Activated B cell treated with CpG ODN at 0.5 μM for 24 hours (primary cell): ENCODE measurements at regions of chr1 and their contacts with region 1.

Region 1: GRCh38 chr1:169893494-169894362 is at the start of gene SCYL3:
- DNase-seq: peak; percentile 82
- ATAC-seq: peak; percentile 87
- H3K4me3 Mint-ChIP-seq: peak within 1 kb of the TSS; percentile 88
- H3K27ac Mint-ChIP-seq: peak within 1 kb of the TSS; percentile 100
- H3K4me1 Mint-ChIP-seq: peaks cover 40% of the 10 kb centered on the region
- H3K27me3 Mint-ChIP-seq: peaks cover 4% of the 10 kb centered on the region
- CTCF ChIP-seq: no peak
- total RNA-seq, gene SCYL3: 14.5 and 16.2 TPM in 2 replicates

Region 2: DNA sequence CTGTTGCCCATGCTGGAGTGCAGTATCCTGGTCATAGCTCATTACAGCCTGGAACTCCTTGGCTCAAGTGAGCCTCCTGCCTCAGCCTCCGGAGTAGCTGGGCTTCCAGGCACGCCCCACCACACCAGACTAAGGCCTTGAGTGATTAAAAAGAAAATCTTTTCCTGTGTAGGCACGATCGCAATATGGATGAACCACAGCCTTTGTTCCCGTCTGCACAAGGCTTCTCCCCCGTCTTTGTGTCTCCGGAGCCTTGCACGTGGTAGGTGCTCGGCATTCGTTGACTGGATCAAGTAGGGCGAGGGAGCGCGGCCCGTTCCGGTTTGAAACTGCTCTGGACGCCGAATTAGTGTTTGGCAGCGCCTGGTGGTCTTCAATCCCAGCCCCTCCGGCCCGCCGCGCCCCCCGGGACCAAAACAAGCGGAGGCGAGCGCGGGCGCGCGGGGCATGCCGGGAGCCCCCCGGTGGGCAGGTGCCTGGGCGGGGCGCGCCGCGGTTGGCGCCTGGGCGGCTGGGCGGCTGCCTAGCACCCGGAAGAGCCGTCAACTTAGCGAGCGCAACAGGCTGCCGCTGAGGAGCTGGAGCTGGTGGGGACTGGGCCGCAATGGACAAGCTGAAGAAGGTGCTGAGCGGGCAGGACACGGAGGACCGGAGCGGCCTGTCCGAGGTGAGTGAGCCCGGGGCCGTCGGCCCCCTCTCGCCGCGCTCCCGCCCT is 1668.1 kb before region 1 on chr1 and contains the start of gene SFT2D2:
- CTCF ChIA-PET with region 1: no interaction called
- POLR2A ChIA-PET with region 1: no interaction called
- intact Hi-C with region 1: loop called (anchors 5 kb)
- DNase-seq: peak; percentile 85
- ATAC-seq: peak; percentile 92
- H3K4me3 Mint-ChIP-seq: peak within 1 kb of the TSS; percentile 96
- H3K27ac Mint-ChIP-seq: peak within 1 kb of the TSS; percentile 93
- H3K4me1 Mint-ChIP-seq: peaks cover 47% of the 10 kb centered on the region
- H3K27me3 Mint-ChIP-seq: no peaks in the 10 kb centered on the region
- CTCF ChIP-seq: no peak
- total RNA-seq, gene SFT2D2: 62.7 and 63.4 TPM in 2 replicates

Region 3: GRCh38 chr1:169106095-169106920 is 787.4 kb before region 1 on chr1 and contains the start of gene ATP1B1:
- CTCF ChIA-PET with region 1: no interaction called
- POLR2A ChIA-PET with region 1: no interaction called
- intact Hi-C with region 1: loop called (anchors 1 kb)
- DNase-seq: peak; percentile 77
- ATAC-seq: peak; percentile 95
- H3K4me3 Mint-ChIP-seq: peak within 1 kb of the TSS; percentile 89
- H3K27ac Mint-ChIP-seq: no peak within 1 kb of the TSS
- H3K4me1 Mint-ChIP-seq: peaks cover 18% of the 10 kb centered on the region
- H3K27me3 Mint-ChIP-seq: peaks cover 35% of the 10 kb centered on the region
- CTCF ChIP-seq: no peak
- total RNA-seq, gene ATP1B1: 1.6 and 1.8 TPM in 2 replicates

Region 4: DNA sequence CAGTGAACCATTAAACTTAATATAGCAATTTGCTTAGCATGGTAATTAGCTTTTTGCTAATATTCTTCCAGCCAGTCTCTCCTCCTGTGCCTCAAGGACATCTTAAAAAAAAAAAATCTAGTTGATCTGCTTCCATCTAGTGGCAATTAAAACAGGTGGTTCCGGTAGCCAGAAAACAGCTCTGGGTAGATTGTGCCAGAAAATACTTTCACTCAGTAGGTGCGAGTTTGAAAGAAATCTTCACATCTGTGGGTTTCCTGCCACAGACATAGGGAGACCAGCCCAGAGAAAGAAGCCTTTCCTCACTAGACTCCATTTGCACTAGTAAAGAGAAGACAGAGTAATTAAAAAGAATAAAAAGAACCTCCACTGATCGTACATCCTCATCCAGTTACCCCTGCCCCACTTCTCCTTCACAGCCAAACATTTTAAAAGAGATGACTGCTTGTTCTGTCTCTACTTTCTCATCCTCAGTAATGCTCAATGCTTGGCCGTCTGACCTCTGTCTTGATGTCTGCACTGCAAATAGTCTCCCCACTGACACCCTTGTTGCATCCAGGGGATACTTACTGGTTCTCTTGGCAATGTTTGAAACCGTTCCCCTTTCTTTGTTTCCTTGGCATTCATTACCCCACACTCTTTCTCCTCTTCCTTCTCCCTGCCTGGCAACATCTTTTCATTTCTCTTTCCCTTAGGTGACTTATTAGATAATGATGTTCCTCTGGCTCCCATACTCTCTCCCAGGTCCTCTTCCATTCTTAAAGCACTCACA is 199.2 kb before region 1 on chr1:
- CTCF ChIA-PET with region 1: no interaction called
- POLR2A ChIA-PET with region 1: interaction called, 10 read pairs
- intact Hi-C with region 1: loop called (anchors 5 kb)
- DNase-seq: no peak
- ATAC-seq: peak; percentile 9
- H3K4me3 Mint-ChIP-seq: peak overlapping the region; percentile 62
- H3K27ac Mint-ChIP-seq: peak overlapping the region; percentile 90
- H3K4me1 Mint-ChIP-seq: peaks cover 97% of the 10 kb centered on the region
- H3K27me3 Mint-ChIP-seq: no peaks in the 10 kb centered on the region
- CTCF ChIP-seq: no peak

Region 5: DNA sequence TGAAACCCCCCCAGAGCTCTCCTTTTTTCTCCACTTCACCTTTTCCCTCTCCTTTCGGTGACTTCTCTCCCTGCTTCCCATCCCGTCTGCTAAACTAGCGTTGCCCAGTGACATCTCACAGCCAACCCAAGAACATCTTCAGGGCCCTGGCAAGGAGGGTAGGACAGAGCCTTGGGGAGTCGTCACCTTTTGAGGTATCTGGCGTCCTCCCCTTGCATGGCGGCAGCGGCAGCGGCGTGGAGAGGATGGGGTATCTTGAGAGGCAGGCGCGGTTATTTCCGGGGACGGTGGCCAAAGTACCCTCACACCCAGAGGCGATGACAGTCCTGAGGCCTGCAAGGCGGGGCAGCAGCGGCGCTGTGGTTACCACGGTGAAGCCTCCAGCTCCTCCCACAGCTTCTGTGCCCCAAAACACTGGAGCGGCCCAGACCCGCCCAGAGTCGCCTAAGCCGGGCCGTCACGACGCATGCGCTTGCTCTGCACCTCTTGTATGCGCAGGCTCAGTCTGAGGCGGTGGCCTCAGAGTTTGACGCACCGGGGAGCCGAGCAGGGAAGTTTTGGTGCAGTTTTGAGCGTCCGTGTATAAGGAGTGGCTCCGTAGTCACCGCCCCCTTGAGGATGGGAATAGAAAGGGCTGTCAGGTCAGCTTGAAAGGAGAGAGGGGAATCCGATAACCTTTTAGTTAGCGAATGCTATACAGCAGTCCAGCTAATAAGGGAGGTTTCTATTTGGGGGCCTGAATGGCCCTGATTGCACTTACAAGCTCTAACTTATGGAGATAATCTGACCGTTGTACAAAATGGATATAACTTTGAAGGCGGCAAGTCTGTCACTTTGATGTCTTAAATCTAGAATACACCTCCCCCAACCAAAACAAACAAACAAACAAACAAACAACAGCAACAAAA is 180.8 kb after region 1 on chr1 and contains the start of gene KIFAP3:
- CTCF ChIA-PET with region 1: interaction called, 3 read pairs
- POLR2A ChIA-PET with region 1: interaction called, 21 read pairs
- intact Hi-C with region 1: loop called (anchors 1 kb)
- DNase-seq: peak; percentile 89
- ATAC-seq: peak; percentile 93
- H3K4me3 Mint-ChIP-seq: peak within 1 kb of the TSS; percentile 94
- H3K27ac Mint-ChIP-seq: peak within 1 kb of the TSS; percentile 87
- H3K4me1 Mint-ChIP-seq: peaks cover 52% of the 10 kb centered on the region
- H3K27me3 Mint-ChIP-seq: peaks cover 2% of the 10 kb centered on the region
- CTCF ChIP-seq: no peak
- total RNA-seq, gene KIFAP3: 11.8 and 12.7 TPM in 2 replicates

Region 6: DNA sequence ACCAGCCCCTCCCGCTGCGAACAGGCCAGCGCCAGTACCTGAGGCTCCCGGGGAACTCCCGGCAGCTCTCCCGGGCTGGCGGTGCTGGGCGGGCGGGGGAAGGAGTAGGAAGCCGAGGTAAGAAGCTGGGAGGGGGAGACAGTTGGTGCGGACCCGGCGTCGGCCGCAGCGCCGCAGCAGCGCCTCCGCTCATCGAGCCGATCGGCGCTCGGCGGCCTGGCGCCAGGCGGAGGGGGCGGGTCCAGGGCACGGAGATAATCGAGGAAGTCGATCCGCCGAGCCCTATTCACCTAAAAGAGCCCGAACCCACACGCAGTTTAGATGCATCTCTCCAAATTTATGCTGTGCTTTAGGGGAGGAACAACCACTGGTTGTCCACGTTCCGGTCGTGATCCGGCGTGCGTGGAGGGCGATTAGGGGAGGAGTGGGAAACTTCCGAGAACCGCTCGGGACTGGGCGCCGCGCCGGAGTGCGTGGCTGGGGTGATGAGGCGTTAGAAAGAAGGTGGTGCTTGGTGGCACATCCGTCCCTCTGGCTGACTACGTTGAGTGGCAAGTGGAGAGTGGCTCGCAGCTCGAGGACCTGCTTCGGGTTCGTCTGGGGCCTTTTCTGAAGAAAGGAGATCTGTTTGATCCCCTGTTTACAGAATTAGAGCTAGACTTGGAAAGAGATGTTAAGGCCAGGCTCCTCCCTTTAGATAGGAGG is 1848.3 kb after region 1 on chr1 and contains the start of gene VAMP4:
- CTCF ChIA-PET with region 1: no interaction called
- POLR2A ChIA-PET with region 1: interaction called, 3 read pairs
- intact Hi-C with region 1: loop called (anchors 1 kb)
- DNase-seq: peak; percentile 82
- ATAC-seq: peak; percentile 93
- H3K4me3 Mint-ChIP-seq: peak within 1 kb of the TSS; percentile 100
- H3K27ac Mint-ChIP-seq: peak within 1 kb of the TSS; percentile 100
- H3K4me1 Mint-ChIP-seq: peaks cover 37% of the 10 kb centered on the region
- H3K27me3 Mint-ChIP-seq: no peaks in the 10 kb centered on the region
- CTCF ChIP-seq: no peak
- total RNA-seq, gene VAMP4: 9.0 and 10.5 TPM in 2 replicates